Activated T-helper 1 cell treated with anti-CD3 and anti-CD28 coated beads, Interleukin-12 subunit alpha, Interleukin-12 subunit beta, Interleukin-2, Interleukin-4 antibody, amounts not matched to agents 30 ng/mL and 10 ng/mL and 1 ng/mL, durations not matched to agents 14 hours and 24 hours and 36 hours (primary cell): ENCODE measurements at regions of chr5 and their contacts with region 1.

Region 1: GRCh38 chr5:144191998-144192397 is 21.3 kb downstream of the KCTD16 start:
- DNase-seq: peak; percentile 48
- H3K4me3 Mint-ChIP-seq: no peak overlapping the region
- H3K27ac Mint-ChIP-seq: no peak overlapping the region
- H3K4me1 Mint-ChIP-seq: peaks cover 21% of the 10 kb centered on the region
- H3K27me3 Mint-ChIP-seq: peaks cover 8% of the 10 kb centered on the region

Region 2: DNA sequence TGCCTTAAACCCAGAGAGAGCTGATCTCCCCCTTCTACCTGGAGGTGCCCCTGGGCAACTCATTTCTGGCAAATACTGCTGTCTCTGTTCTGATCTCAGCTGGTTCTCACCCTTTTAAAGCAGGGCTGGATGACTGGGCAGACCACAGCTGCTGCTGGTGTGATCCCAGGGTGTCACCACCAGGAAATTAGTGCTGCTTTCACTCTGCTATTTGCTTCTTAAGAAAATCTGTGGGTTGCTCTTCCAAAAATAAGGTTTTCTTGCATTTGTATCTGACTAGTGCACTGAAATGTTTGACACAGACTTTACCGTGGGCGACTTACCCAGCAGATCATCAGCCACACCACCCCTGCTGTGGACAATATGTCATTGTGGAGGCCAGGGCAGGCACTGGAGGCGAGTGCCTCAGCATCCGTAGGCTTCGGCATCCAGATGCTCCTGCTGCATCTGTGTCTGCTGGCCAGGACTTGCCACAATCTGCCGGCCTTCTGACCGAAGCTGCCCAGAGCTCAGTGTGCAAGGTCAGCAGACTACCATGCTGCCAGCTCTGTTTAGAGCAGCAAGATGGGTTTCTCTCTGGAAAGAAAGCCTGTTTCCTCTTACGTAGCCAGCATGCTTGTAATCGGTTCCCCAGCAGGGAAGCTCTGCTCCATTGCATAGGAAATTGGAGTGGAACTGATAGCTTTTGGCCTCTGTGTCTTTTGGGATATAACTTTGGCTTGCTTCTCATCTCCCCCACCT is 1408.2 kb before region 1 on chr5:
- intact Hi-C with region 1: loop called (anchors 2 kb)
- DNase-seq: peak; percentile 57
- H3K4me3 Mint-ChIP-seq: peak overlapping the region; percentile 32
- H3K27ac Mint-ChIP-seq: peak overlapping the region; percentile 62
- H3K4me1 Mint-ChIP-seq: peaks cover 63% of the 10 kb centered on the region
- H3K27me3 Mint-ChIP-seq: no peaks in the 10 kb centered on the region

Region 3: GRCh38 chr5:143008809-143009521 is 1183.0 kb before region 1 on chr5:
- intact Hi-C with region 1: loop called (anchors 2 kb)
- DNase-seq: peak; percentile 82
- H3K4me3 Mint-ChIP-seq: peak overlapping the region; percentile 24
- H3K27ac Mint-ChIP-seq: peak overlapping the region; percentile 86
- H3K4me1 Mint-ChIP-seq: peaks cover 79% of the 10 kb centered on the region
- H3K27me3 Mint-ChIP-seq: no peaks in the 10 kb centered on the region

Region 4: DNA sequence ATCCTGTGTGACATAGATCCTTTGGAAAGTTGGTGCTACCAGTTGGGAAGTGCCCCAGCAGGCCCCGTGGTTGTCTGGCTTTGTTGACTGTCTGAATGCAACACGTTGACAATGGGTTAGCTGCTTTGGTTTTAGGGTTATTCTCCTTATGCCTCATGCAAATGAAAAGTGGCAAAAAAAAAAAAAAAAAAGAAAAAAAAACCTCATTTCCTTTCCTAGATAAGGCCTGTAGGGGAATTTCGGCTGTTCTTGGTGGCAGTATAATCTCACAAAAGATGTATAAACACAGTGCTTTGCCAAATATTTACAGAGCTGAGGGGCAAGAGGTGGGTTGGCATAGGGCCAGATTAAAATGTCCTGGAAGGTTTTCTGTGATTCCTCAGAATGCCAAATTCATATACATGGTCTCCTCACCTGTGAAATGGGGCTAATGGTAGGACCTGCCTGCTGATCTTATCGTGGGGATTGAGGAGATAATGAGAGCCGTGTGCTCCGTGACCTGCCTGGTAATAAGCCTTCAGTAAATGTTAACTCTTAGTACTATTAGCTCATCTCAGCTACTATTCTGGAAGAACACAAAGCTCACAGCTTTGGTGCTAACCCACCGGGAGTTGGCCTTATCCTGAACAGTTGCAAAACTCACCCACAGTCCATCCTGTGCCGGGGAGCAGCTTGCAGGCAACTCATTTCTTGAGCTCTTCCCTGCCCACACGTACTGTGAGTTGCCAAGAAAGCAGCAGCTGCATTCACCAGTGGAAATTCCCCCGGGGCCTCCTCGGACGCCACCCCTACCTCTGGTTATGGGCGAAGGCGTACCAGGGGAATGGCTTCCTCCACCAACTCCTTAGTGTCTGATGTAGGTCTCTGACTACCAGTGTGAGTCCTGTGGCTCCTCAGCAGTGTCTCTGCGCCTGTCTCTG is 1008.8 kb before region 1 on chr5:
- intact Hi-C with region 1: loop called (anchors 5 kb)
- DNase-seq: peak; percentile 68
- H3K4me3 Mint-ChIP-seq: peak overlapping the region; percentile 29
- H3K27ac Mint-ChIP-seq: peak overlapping the region; percentile 93
- H3K4me1 Mint-ChIP-seq: peaks cover 77% of the 10 kb centered on the region
- H3K27me3 Mint-ChIP-seq: no peaks in the 10 kb centered on the region

Region 5: DNA sequence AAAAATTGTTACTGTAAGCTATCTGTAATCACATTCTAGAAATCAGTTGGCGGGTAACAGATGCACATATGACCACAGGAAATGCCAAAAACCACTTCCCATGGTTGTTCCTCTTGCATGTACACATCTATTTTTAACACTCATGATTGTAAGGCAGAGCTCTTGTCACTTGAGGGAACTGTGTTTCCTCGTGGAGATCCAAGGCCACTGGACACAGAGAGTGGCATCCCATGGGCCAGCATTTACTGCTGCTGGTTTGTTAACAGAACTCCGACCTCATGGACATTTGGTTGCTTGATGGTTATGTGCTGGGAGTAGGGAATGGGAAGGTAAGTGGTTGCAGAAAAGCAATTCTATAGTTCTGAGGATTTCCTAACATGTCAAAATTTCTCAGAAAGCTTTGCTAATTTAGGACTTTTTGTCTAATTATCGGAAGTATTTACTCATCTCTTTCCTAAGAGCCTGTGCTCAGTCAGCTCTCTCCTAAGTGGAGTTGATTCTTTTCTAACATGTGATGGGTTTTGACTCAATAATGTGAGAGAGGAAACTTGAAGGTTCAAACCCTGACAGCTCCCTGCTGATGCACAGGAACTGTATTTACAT is 586.5 kb before region 1 on chr5:
- intact Hi-C with region 1: loop called (anchors 2 kb)
- DNase-seq: peak; percentile 25
- H3K4me3 Mint-ChIP-seq: peak overlapping the region; percentile 56
- H3K27ac Mint-ChIP-seq: peak overlapping the region; percentile 91
- H3K4me1 Mint-ChIP-seq: peaks cover 38% of the 10 kb centered on the region
- H3K27me3 Mint-ChIP-seq: no peaks in the 10 kb centered on the region

Region 6: GRCh38 chr5:144170276-144171024 is 21.5 kb before region 1 on chr5 and contains the starts of genes KCTD16 and YIPF5:
- intact Hi-C with region 1: loop called (anchors 1 kb)
- DNase-seq: peak; percentile 98
- H3K4me3 Mint-ChIP-seq: peak within 1 kb of the TSS; percentile 96
- H3K27ac Mint-ChIP-seq: peak within 1 kb of the TSS; percentile 80
- H3K4me1 Mint-ChIP-seq: peaks cover 45% of the 10 kb centered on the region
- H3K27me3 Mint-ChIP-seq: peaks cover 13% of the 10 kb centered on the region
- total RNA-seq, gene KCTD16: not detected in 2 replicates
- total RNA-seq, gene YIPF5: 34.2 and 37.9 TPM in 2 replicates